Ovary (tissue), 10 donors: ENCODE measurements at regions of chr14 and their contacts with region 1.

Region 1: GRCh38 chr14:60622917-60623257 is 26.4 kb downstream of the SIX1 start:
- DNase-seq: no peak
- H3K4me3 ChIP-seq: no peak overlapping the region
- H3K27ac ChIP-seq: no peak overlapping the region
- H3K4me1 ChIP-seq: no peaks in the 10 kb centered on the region
- H3K27me3 ChIP-seq: no peaks in the 10 kb centered on the region
- CTCF ChIP-seq: no peak
- EP300 ChIP-seq: no peak
- POLR2A ChIP-seq: no peak

Region 2: GRCh38 chr14:60266021-60266937 is 356.6 kb before region 1 on chr14:
- intact Hi-C with region 1: no loop called
- DNase-seq: no peak
- H3K4me3 ChIP-seq: no peak overlapping the region
- H3K27ac ChIP-seq: no peak overlapping the region
- H3K4me1 ChIP-seq: no peaks in the 10 kb centered on the region
- H3K27me3 ChIP-seq: no peaks in the 10 kb centered on the region
- CTCF ChIP-seq: no peak
- EP300 ChIP-seq: no peak
- POLR2A ChIP-seq: no peak

Region 3: DNA sequence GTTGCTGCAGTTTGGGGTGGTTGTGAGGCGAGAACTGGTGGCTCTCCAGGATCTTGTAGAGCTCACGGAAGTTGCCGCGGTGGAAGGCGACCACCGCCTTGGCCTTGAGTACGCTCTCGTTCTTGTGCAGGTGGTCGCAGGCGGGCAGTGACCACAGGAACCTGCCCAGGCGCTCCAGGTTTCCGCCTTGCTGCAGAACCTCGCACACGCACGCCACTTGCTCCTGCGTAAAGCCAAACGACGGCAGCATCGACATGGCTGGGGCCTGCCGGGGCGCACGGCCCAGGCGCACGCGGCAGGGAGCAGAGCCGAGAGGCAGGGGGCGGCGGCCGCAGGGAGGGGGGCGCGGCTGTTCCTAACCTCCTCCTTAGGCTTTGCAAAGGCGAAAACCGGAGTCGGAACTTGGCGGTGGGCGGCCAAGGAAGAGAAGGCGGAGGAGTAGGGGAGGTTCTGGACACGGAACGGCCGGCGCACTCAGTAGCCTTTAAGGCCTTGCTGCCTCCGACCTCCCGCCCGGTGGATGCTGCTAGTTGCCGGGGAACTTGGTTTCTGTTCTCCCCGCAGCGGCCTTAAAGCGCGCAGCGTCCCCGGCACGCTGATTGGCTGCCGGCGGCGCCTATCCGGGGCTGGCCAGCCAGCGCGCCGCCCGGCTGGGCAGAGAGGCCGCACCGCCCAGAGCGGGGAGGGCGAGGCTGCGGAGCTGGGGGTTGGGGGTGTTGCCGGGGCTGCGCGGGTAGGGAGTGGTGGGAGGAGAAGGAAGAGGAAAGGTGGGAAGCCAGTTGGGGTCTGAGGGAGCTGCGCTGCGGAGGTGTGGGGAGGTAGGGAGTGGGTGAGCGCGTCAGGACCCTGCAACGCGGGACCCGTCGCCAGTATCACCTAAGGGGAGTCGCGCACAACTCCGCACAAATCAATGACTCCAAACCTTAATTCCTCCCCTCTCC is 26.3 kb after region 1 on chr14 and contains the start of gene SIX1:
- intact Hi-C with region 1: no loop called
- DNase-seq: peak; percentile 48 to 75 (median 58)
- H3K4me3 ChIP-seq: peak within 1 kb of the TSS; percentile 25
- H3K27ac ChIP-seq: no peak within 1 kb of the TSS
- H3K4me1 ChIP-seq: peaks cover 9% of the 10 kb centered on the region
- H3K27me3 ChIP-seq: peaks cover 11% of the 10 kb centered on the region
- CTCF ChIP-seq: no peak
- EP300 ChIP-seq: no peak
- POLR2A ChIP-seq: no peak
- total RNA-seq, gene SIX1: 0.07 to 0.60 (median 0.19) TPM in 6 of 7 donors, not detected in the other

Region 4: DNA sequence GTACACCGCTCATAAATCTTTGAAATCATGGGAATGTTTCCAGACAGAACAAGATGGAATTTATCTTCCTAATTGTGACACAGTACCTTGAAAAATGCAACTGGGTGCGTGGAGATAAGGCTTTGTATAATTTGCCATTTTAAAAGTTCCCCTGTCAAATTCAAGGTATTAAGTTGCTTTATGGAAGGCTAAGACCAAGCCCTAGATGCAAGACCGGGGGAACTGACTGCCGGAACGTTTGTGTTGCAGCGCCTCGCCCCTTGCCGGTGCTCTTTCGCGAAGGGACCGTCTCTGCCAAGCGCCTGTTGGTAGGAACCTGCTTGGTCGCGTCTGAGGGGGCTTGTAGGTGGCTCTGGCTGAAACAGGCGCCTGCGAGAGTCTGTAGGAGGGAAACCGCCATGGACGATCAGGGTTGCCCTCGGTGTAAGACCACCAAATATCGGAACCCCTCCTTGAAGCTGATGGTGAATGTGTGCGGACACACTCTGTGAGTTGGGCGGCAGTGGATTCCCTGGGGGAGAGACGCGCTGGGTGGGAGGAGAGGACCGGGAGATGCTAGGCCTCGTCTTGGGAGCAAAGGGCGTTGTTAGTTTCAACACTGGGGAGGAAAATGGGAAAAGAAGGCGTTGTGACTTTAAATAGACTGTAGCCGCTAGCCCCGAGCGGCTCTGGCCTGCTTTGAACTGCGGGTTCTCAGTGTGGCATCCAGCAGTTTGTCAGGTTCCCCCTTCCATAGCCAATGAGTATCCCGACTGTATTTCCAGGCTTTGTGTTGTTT is 111.8 kb after region 1 on chr14 and contains the start of gene MNAT1:
- intact Hi-C with region 1: no loop called
- DNase-seq: peak; percentile 69 to 83 (median 74)
- H3K4me3 ChIP-seq: peak within 1 kb of the TSS; percentile 83
- H3K27ac ChIP-seq: peak within 1 kb of the TSS; percentile 64 to 77
- H3K4me1 ChIP-seq: peaks cover 2% of the 10 kb centered on the region
- H3K27me3 ChIP-seq: no peaks in the 10 kb centered on the region
- CTCF ChIP-seq: peak in 1 of 3 donors; percentile 5
- EP300 ChIP-seq: no peak
- POLR2A ChIP-seq: peak; percentile 38
- total RNA-seq, gene MNAT1: 28.7 to 59.4 (median 44.8) TPM

Region 5: DNA sequence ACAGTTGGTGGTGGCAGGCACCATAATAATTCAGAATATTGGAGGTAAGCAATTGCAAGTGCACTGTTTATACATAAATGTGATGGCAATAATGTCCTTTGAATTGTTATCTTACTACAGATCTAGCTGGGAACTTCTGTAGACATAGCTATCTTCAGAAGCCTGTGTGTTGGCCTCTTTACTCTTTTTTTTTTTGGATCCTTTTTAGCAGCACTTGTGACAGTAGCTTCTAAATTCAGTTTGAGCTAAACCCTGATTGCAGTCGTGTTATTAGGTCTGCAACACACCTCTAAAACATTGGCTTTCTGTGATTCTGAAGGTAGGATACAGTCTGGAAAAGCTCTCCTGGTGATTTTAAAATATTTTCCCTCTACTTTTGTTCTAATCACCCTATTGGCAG is 396.6 kb after region 1 on chr14:
- intact Hi-C with region 1: loop called in 2 of 4 experiments (anchors 10 kb)
- DNase-seq: no peak
- H3K4me3 ChIP-seq: no peak overlapping the region
- H3K27ac ChIP-seq: no peak overlapping the region
- H3K4me1 ChIP-seq: no peaks in the 10 kb centered on the region
- H3K27me3 ChIP-seq: no peaks in the 10 kb centered on the region
- CTCF ChIP-seq: no peak
- EP300 ChIP-seq: no peak
- POLR2A ChIP-seq: no peak

Region 6: DNA sequence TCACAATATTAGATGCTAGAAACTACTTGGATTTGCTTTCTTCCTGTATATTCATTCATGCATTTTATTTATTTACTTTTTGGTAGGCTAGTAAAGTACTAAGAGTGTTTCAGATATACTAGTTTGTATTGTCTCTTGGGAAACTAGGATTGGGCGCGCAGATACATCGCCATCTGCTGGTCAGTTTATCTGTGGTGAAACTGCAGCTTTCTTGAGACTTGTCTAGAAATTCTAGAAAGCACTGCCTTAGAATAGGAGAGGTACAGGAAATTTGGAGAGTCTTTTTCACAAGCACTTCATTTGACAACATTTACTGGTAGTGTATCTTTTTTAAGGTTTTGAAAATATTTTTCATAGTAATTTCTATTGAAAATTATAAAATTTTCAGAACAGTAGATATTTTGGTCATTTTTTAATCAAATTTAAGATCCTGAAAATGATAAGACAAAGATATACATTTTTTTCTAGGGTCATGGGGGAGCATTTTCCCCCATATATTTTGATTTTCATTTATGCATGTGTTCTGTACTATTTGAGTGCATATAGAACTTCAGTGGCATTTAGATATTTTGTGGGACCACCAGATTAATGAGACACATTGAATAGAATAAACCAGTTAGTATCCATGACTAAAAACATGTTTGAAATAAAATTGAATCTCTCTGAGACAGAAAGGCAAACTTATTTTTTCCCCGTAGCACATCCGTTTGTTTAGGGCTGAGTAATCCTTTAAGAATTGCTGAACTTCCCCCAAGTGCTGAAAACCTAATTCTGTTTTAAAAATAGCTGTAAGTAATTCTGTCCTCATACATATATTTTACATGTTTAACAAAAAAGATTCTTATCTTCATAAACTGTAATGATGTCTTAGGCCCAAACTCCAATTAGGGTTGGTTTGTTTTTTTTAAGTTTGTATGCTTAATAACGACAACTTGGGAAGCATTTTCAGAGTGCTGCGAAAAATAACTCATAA is 402.6 kb after region 1 on chr14:
- intact Hi-C with region 1: loop called (anchors 5 to 10 kb)
- DNase-seq: peak; percentile 33 to 65 (median 44)
- H3K4me3 ChIP-seq: no peak overlapping the region
- H3K27ac ChIP-seq: no peak overlapping the region
- H3K4me1 ChIP-seq: no peaks in the 10 kb centered on the region
- H3K27me3 ChIP-seq: no peaks in the 10 kb centered on the region
- CTCF ChIP-seq: peak; percentile 59 to 70 (median 64)
- EP300 ChIP-seq: no peak
- POLR2A ChIP-seq: no peak